ENCODE measurements at regions of chr22 and their contacts with region 1.

Region 1: GRCh38 chr22:46547883-46548244 is 10.4 kb upstream of the CELSR1 start:
- DNase-seq: no peak
- H3K4me3 Mint-ChIP-seq: peak overlapping the region; percentile 33
- H3K27ac Mint-ChIP-seq: peak overlapping the region; percentile 85
- H3K4me1 Mint-ChIP-seq: peaks cover 21% of the 10 kb centered on the region
- H3K27me3 Mint-ChIP-seq: no peaks in the 10 kb centered on the region
- CTCF ChIP-seq: no peak

Region 2: GRCh38 chr22:46355371-46355995 is 192.4 kb before region 1 on chr22:
- CTCF ChIA-PET with region 1: interaction called, 41 read pairs
- POLR2A ChIA-PET with region 1: interaction called, 6 read pairs
- intact Hi-C with region 1: no loop called
- DNase-seq: peak; percentile 68
- H3K4me3 Mint-ChIP-seq: no peak overlapping the region
- H3K27ac Mint-ChIP-seq: peak overlapping the region; percentile 60
- H3K4me1 Mint-ChIP-seq: peaks cover 16% of the 10 kb centered on the region
- H3K27me3 Mint-ChIP-seq: no peaks in the 10 kb centered on the region
- CTCF ChIP-seq: peak; percentile 83

Region 3: DNA sequence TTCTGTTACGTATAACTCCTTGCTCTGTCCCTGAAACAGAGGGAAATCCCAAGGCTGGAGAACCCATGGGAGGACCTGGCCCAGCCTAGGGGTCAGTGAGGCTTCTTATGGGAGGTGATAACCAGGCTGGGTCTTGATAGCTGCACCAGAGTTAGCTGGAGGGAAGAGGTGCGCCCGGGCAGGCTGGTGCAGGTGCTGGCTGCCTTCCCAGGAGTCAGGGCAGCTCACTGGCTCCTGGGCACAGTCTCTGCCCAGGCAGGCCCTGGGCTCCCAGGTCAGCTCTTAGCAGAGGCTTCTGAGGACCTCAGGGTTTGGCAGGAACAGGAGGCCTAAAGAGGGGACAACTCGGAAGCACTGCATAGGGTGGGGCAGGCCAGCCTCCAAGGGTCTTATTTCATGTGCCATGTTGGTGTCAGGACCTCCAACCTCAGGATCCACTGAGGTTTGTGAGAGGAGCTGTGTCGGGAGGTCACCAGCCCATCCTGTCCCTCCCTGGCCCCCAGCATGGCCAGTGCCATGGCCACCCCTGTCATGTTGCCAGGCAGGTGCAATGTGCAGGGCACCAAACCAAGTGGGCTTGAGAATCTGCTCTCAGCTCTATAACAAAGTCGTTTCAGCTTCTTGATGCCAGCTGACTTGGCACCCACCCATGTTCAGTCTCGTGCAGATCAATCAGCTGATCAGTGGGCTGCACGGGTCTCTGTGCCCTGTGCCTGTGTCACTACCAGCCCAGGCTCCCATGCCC is 10.0 kb after region 1 on chr22:
- CTCF ChIA-PET with region 1: interaction called, 30 read pairs
- POLR2A ChIA-PET with region 1: interaction called, 31 read pairs
- intact Hi-C with region 1: no loop called
- DNase-seq: peak; percentile 73
- H3K4me3 Mint-ChIP-seq: no peak overlapping the region
- H3K27ac Mint-ChIP-seq: peak overlapping the region; percentile 64
- H3K4me1 Mint-ChIP-seq: peaks cover 17% of the 10 kb centered on the region
- H3K27me3 Mint-ChIP-seq: no peaks in the 10 kb centered on the region
- CTCF ChIP-seq: no peak